Cardiac septum (tissue), 1 donor: ENCODE measurements at regions of chr10 and their contacts with region 1.

Region 1: DNA sequence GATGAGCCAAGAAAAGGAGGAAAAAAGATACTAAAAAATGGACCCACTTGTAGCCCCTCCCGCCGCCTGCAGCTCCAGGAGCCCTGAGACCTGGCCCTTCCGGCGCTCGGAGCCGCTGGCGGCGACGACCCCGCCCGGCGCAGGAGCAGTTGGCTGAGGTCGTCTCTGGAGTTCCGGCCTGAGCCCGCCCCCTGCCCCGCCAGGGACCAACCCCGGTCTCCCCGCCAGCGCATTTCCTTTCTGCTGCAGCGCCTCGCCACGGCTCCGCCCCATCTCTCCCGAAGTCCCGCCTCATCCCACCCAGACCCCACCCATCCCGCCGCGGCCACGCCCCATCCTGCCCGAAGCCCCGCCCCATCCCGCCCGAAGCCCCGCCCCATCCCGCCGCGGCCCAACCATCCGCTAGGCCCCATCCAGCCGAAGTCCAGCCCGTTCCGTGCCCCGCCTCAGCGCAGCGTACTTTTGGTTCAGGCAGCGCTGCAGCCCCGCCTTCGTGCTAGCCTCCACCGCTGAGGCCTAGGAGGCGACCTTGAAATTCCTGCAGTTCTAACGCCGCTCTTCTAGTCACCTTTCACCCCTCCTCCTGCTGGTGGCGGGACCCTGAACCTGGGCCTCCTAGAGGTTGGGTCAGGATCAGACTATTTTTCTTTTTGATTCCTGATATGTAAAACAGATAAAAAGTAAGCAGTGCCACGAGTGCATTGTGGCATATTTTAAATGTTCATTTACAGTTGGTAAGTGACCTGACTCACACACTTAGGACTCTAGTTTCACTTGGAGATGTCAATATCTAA is at the start of gene STN1:
- DNase-seq: peak; percentile 99
- total RNA-seq, gene STN1: 33.9 TPM

Region 2: DNA sequence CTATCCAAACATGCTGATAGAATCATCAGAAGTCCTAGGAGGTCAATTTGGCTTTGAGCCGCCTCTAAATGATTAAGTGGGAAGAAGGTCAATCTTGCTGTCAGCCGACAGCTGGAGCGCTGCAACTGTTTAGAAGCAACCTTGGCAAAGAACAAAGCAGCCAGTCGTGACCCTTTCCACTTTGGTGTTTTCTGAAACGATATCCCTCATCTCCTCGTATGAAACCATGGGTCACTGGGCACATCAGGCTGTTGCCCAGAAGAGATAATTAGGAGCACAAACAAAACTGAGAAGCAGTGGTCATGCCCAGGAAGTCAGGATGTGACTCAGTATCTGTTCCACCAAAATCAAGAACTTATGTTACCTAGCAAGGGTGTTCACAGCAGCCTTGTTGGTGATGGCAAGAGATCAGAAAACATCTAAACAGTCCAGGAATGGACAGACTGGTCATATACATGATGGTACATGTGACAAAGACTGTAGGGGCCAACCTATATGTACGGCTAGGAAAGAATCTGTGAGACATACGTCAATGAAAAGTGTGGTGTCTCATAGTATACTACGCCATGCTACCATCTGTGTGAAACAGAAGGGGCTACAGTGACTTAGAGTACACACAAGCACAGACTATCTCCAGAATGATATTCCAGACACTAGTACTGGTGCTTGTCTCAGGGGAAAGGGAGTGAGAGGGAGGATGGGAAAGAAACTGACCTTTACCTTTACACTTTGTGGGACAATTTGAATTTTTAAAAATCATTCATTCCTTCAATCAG is 22.7 kb before region 1 on chr10:
- intact Hi-C with region 1: loop called (anchors 2 kb)
- DNase-seq: no peak

Region 3: DNA sequence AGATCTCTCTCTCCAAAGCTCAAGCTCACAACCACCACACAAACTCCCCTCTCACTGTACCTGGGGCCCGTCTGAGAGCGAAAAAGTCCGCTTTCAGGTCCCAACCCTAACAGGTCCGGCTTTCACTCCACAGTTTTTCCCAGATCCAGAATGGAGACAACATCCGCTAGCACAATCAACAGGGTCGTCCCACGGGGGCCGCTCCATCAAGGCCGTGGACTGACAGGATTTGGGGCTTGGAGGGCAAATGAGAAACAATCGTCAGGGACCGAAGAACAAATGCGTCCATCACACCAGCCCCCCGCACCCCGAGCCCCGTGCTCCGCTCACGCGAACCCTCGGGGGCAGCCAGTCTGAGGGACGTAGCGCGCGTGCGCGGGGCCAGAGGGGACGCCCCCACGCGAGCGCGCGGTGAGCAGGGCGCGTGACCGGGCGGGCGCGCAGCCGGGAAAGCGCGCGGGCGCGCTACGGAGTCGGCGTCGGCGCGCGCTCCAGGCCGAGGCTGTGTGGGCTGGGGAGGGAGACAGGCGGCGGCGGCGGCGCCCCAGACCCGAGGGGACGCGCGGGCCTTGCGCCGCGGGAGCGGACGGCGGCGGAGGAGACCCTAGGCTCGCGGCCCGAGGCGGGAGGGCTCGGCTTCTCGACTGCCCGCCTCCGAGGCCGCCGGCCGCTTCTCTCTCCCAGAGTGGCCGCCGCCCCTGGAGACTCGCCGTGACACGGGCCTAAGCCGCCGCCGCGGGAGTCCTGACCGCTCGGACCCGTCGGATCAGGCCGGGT is 48.6 kb after region 1 on chr10 and contains the start of gene SLK:
- intact Hi-C with region 1: loop called (anchors 2 kb)
- DNase-seq: peak; percentile 94
- total RNA-seq, gene SLK: 59.7 TPM

Region 4: DNA sequence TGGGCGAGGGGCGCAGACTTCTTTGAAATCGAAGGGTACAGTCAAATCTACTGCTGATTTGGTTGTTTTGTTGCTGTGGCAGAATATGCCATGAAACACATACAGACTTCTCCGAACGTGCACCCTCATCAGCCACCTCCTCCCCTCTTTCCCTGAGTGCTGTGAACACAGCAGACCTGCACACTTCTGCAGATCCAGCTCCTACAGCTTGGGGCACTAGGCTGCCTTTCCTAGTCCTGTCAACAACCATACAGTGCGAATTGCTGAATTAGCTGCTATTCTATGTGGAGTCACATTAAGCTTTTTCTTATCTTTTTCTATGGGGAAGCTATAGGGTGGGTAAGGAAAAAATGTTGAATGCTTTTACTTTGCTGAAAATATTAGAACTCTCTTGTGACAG is 109.9 kb after region 1 on chr10:
- intact Hi-C with region 1: loop called (anchors 10 kb)
- DNase-seq: no peak

Region 5: GRCh38 chr10:104337974-104338735 is 419.9 kb after region 1 on chr10 and contains the start of gene ITPRIP:
- intact Hi-C with region 1: loop called (anchors 10 kb)
- DNase-seq: peak; percentile 91
- total RNA-seq, gene ITPRIP: 25.4 TPM